ENCODE measurements at regions of chr3 and their contacts with region 1.

Region 1: GRCh38 chr3:9932843-9933560 is 632 bp upstream of the CRELD1 start:
- DNase-seq: peak; percentile 76 to 88 (median 84)
- ATAC-seq: peak; percentile 74
- H3K4me3 ChIP-seq: peak overlapping the region; percentile 98
- H3K4me3 Mint-ChIP-seq: peak overlapping the region; percentile 71 to 99 (median 98)
- H3K27ac ChIP-seq: peak overlapping the region; percentile 98
- H3K27ac Mint-ChIP-seq: peak overlapping the region; percentile 94 to 100 (median 99)
- H3K4me1 ChIP-seq: peaks cover 25 to 28% of the 10 kb centered on the region in 2 donors
- H3K4me1 Mint-ChIP-seq: peaks cover 30 to 58% (median 48%) of the 10 kb centered on the region in 7 donors
- H3K27me3 ChIP-seq: no peaks in the 10 kb centered on the region
- H3K27me3 Mint-ChIP-seq: no peaks in the 10 kb centered on the region

Region 2: GRCh38 chr3:9649791-9650521 is 283.0 kb before region 1 on chr3:
- CTCF ChIA-PET with region 1: interaction called, 4 read pairs
- POLR2A ChIA-PET with region 1: interaction called, 8 read pairs
- intact Hi-C with region 1: loop called (anchors 1 to 10 kb)
- DNase-seq: peak in 2 of 9 donors; percentile 4 to 5
- ATAC-seq: peak; percentile 15
- H3K4me3 ChIP-seq: peak overlapping the region; percentile 97
- H3K4me3 Mint-ChIP-seq: peak overlapping the region; percentile 86 to 98 (median 95)
- H3K27ac ChIP-seq: peak overlapping the region; percentile 85
- H3K27ac Mint-ChIP-seq: peak overlapping the region; percentile 91 to 98 (median 97)
- H3K4me1 ChIP-seq: peaks cover 15 to 19% of the 10 kb centered on the region in 2 donors
- H3K4me1 Mint-ChIP-seq: peaks cover 19 to 51% (median 37%) of the 10 kb centered on the region in 7 donors
- H3K27me3 ChIP-seq: no peaks in the 10 kb centered on the region
- H3K27me3 Mint-ChIP-seq: peaks cover 0 to 3% (median 0%) of the 10 kb centered on the region in 5 donors

Region 3: GRCh38 chr3:9792405-9793160 is 140.4 kb before region 1 on chr3 and contains the starts of genes ARPC4 and TADA3:
- CTCF ChIA-PET with region 1: no interaction called
- POLR2A ChIA-PET with region 1: interaction called, 19 read pairs
- intact Hi-C with region 1: loop called (anchors 1 kb)
- DNase-seq: peak; percentile 83 to 96 (median 93)
- ATAC-seq: peak; percentile 92
- H3K4me3 ChIP-seq: peak within 1 kb of the TSS; percentile 81
- H3K4me3 Mint-ChIP-seq: peak within 1 kb of the TSS; percentile 90 to 100 (median 98)
- H3K27ac ChIP-seq: peak within 1 kb of the TSS; percentile 98
- H3K27ac Mint-ChIP-seq: peak within 1 kb of the TSS; percentile 97 to 100 (median 99)
- H3K4me1 ChIP-seq: peaks cover 47% of the 10 kb centered on the region in 2 donors
- H3K4me1 Mint-ChIP-seq: peaks cover 45 to 75% (median 63%) of the 10 kb centered on the region in 7 donors
- H3K27me3 ChIP-seq: no peaks in the 10 kb centered on the region
- H3K27me3 Mint-ChIP-seq: no peaks in the 10 kb centered on the region
- total RNA-seq, gene ARPC4: 128 to 273 (median 129) TPM
- total RNA-seq, gene TADA3: 31.6 to 67.4 (median 36.8) TPM

Region 4: DNA sequence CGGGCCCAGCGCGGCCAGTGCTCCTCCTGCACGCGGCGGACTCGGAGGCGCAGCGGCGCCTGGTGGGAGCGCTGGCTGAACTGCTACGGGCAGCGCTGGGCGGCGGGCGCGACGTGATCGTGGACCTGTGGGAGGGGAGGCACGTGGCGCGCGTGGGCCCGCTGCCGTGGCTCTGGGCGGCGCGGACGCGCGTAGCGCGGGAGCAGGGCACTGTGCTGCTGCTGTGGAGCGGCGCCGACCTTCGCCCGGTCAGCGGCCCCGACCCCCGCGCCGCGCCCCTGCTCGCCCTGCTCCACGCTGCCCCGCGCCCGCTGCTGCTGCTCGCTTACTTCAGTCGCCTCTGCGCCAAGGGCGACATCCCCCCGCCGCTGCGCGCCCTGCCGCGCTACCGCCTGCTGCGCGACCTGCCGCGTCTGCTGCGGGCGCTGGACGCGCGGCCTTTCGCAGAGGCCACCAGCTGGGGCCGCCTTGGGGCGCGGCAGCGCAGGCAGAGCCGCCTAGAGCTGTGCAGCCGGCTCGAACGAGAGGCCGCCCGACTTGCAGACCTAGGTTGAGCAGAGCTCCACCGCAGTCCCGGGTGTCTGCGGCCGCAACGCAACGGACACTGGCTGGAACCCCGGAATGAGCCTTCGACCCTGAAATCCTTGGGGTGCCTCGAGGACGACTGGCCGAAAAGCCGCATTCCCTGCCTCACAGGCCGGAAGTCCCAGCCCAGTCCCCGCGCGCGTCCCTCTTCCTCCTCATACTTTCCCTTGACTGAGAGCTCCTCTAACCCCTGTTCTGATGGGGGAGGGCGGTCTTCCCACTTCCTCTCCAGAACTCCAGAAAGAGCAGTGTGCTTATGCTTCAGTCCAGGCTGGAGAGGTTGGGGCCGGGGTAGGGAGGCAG is 17.5 kb before region 1 on chr3:
- CTCF ChIA-PET with region 1: interaction called, 4 read pairs
- POLR2A ChIA-PET with region 1: interaction called, 18 read pairs
- intact Hi-C with region 1: loop called (anchors 1 to 2 kb)
- DNase-seq: peak in 6 of 9 donors; percentile 16 to 52 (median 24)
- ATAC-seq: peak; percentile 63
- H3K4me3 ChIP-seq: peak overlapping the region; percentile 48
- H3K4me3 Mint-ChIP-seq: peak overlapping the region; percentile 72 to 86 (median 79)
- H3K27ac ChIP-seq: peak overlapping the region; percentile 8
- H3K27ac Mint-ChIP-seq: no peak overlapping the region
- H3K4me1 ChIP-seq: peaks cover 0 to 11% of the 10 kb centered on the region in 2 donors
- H3K4me1 Mint-ChIP-seq: peaks cover 0 to 18% (median 8%) of the 10 kb centered on the region in 7 donors
- H3K27me3 ChIP-seq: no peaks in the 10 kb centered on the region
- H3K27me3 Mint-ChIP-seq: no peaks in the 10 kb centered on the region

Region 5: GRCh38 chr3:10010486-10011465 is 77.8 kb after region 1 on chr3:
- CTCF ChIA-PET with region 1: no interaction called
- POLR2A ChIA-PET with region 1: interaction called, 7 read pairs
- intact Hi-C with region 1: loop called in 1 of 2 experiments (anchors 1 kb)
- DNase-seq: peak; percentile 25 to 91 (median 46)
- ATAC-seq: peak; percentile 90
- H3K4me3 ChIP-seq: peak overlapping the region; percentile 44
- H3K4me3 Mint-ChIP-seq: peak overlapping the region; percentile 24 to 81 (median 70)
- H3K27ac ChIP-seq: peak overlapping the region; percentile 9
- H3K27ac Mint-ChIP-seq: peak overlapping the region in 2 of 9 donors; percentile 28 to 57
- H3K4me1 ChIP-seq: peaks cover 0 to 14% of the 10 kb centered on the region in 2 donors
- H3K4me1 Mint-ChIP-seq: peaks cover 15 to 28% (median 19%) of the 10 kb centered on the region in 7 donors
- H3K27me3 ChIP-seq: no peaks in the 10 kb centered on the region
- H3K27me3 Mint-ChIP-seq: peaks cover 0 to 19% (median 14%) of the 10 kb centered on the region in 5 donors

Region 6: GRCh38 chr3:10224784-10225665 is 292.0 kb after region 1 on chr3:
- CTCF ChIA-PET with region 1: no interaction called
- POLR2A ChIA-PET with region 1: no interaction called
- intact Hi-C with region 1: loop called (anchors 1 to 2 kb)
- DNase-seq: peak; percentile 25 to 65 (median 57)
- ATAC-seq: peak; percentile 73
- H3K4me3 ChIP-seq: no peak overlapping the region
- H3K4me3 Mint-ChIP-seq: peak overlapping the region; percentile 0 to 85 (median 37)
- H3K27ac ChIP-seq: no peak overlapping the region
- H3K27ac Mint-ChIP-seq: peak overlapping the region; percentile 60 to 93 (median 86)
- H3K4me1 ChIP-seq: peaks cover 30 to 31% of the 10 kb centered on the region in 2 donors
- H3K4me1 Mint-ChIP-seq: peaks cover 37 to 76% (median 50%) of the 10 kb centered on the region in 7 donors
- H3K27me3 ChIP-seq: no peaks in the 10 kb centered on the region
- H3K27me3 Mint-ChIP-seq: no peaks in the 10 kb centered on the region

Region 7: DNA sequence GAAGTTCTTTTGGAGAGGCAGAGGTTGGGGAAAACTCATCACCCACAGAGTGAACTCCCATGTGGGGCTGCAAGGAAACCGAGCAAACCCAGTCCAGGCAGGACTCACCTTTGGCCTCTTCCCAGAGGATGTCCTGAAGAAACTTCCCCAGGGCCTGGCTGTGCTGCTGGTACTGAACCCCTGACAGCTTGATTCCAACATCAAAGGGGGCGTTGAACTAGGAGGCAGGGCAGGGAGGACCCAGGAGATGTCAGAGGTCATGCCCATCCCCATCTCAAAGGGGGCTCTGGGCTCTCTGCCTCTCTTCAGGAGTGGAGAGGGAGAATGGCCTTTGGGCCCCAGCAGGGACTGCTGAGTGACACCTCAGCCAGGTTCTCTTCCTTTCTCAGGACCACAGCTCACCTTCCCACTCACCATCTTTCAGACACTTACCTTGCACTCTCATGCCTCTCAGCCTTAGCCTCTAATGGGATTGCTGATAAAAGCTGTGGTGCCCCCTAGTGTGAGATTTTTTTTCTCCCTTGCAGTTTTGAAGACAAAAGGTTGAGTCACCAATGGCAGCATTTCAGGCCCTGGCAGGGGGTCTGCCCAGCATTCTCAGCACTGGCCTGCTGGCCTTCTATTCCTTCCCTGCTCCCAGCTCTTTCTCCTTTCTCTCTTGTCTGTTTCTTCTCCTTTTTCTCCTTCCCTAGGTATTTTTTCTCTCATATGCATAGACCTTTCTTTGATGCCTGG is 353.8 kb after region 1 on chr3:
- CTCF ChIA-PET with region 1: interaction called, 4 read pairs
- POLR2A ChIA-PET with region 1: interaction called, 9 read pairs
- intact Hi-C with region 1: loop called in 1 of 2 experiments (anchors 1 kb)
- DNase-seq: peak in 5 of 9 donors; percentile 37 to 74 (median 50)
- ATAC-seq: peak; percentile 47
- H3K4me3 ChIP-seq: no peak overlapping the region
- H3K4me3 Mint-ChIP-seq: no peak overlapping the region
- H3K27ac ChIP-seq: no peak overlapping the region
- H3K27ac Mint-ChIP-seq: peak overlapping the region in 7 of 9 donors; percentile 12 to 75 (median 44)
- H3K4me1 ChIP-seq: peaks cover 12 to 13% of the 10 kb centered on the region in 2 donors
- H3K4me1 Mint-ChIP-seq: peaks cover 7 to 39% (median 28%) of the 10 kb centered on the region in 7 donors
- H3K27me3 ChIP-seq: no peaks in the 10 kb centered on the region
- H3K27me3 Mint-ChIP-seq: no peaks in the 10 kb centered on the region